Calu3 (cell line): ENCODE measurements at regions of chr16 and their contacts with region 1.

Region 1: GRCh38 chr16:2919511-2920255 is 8.0 kb downstream of the FLYWCH1 start:
- DNase-seq: peak; percentile 64
- H3K4me3 Mint-ChIP-seq: no peak overlapping the region
- H3K27ac Mint-ChIP-seq: no peak overlapping the region
- H3K4me1 Mint-ChIP-seq: no peaks in the 10 kb centered on the region
- H3K27me3 Mint-ChIP-seq: no peaks in the 10 kb centered on the region
- CTCF ChIP-seq: peak; percentile 84

Region 2: GRCh38 chr16:1503110-1503925 is 1416.4 kb before region 1 on chr16:
- CTCF ChIA-PET with region 1: interaction called, 11 read pairs
- intact Hi-C with region 1: no loop called
- DNase-seq: no peak
- H3K4me3 Mint-ChIP-seq: no peak overlapping the region
- H3K27ac Mint-ChIP-seq: no peak overlapping the region
- H3K4me1 Mint-ChIP-seq: no peaks in the 10 kb centered on the region
- H3K27me3 Mint-ChIP-seq: no peaks in the 10 kb centered on the region
- CTCF ChIP-seq: no peak

Region 3: DNA sequence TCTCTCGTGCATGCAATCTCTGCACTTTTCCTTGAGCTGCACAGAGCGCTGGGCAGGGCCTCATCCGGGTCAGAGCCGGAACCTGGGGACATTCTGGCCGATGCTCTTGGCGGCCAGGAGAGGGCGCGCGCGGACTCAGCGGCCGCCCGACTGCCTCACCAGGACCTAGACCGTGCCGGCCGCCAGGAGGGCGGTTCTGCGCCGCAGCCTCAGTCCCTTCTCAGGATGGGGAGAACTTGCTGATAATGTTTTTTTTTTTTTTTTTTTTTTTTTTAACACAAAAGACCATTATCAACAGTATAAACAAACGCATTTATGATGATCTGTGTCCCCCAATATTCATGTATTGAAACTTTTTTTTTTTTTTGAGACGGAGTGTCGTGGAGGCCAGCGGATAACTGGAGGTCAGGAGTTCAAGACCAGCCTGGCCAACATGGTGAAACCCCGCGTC is 44.7 kb before region 1 on chr16:
- CTCF ChIA-PET with region 1: interaction called, 3 read pairs
- intact Hi-C with region 1: loop called (anchors 2 kb)
- DNase-seq: peak; percentile 84
- H3K4me3 Mint-ChIP-seq: no peak overlapping the region
- H3K27ac Mint-ChIP-seq: no peak overlapping the region
- H3K4me1 Mint-ChIP-seq: no peaks in the 10 kb centered on the region
- H3K27me3 Mint-ChIP-seq: no peaks in the 10 kb centered on the region
- CTCF ChIP-seq: peak; percentile 98